PC-9 (cell line): ENCODE measurements at regions of chr4 and their contacts with region 1.

Region 1: GRCh38 chr4:95304898-95305297 is 243.9 kb downstream of the UNC5C start:
- DNase-seq: peak; percentile 48 to 78
- H3K4me3 ChIP-seq: no peak overlapping the region
- H3K27ac ChIP-seq: no peak overlapping the region
- H3K4me1 ChIP-seq: peaks cover 11% of the 10 kb centered on the region; the same call in 1 of the 2 replicates
- H3K27me3 ChIP-seq: no peaks in the 10 kb centered on the region
- CTCF ChIP-seq: no peak

Region 2: DNA sequence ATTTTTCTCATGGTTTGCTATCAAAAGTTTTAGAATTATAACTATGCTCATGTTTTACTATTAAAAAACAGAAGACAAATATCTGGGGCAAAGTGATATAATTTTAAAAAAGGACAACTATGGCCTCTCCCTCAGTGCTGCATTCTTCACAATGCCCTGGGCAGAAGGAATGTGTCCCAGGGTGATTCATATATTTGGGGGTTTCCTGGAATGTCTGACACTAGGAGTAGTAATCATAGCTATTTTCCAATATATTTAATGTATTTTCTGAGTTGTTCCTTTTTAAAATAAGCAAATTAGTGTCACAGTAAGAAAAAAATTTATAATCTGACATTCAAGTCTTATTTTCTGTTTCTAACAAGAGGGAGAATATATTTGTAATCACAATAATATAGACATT is 37.8 kb before region 1 on chr4:
- CTCF ChIA-PET with region 1: no interaction called
- POLR2A ChIA-PET with region 1: no interaction called
- intact Hi-C with region 1: loop called (anchors 1 kb)
- DNase-seq: peak; percentile 4 to 40
- H3K4me3 ChIP-seq: no peak overlapping the region
- H3K27ac ChIP-seq: peak overlapping the region; percentile 41
- H3K4me1 ChIP-seq: peaks cover 13% of the 10 kb centered on the region
- H3K27me3 ChIP-seq: no peaks in the 10 kb centered on the region
- CTCF ChIP-seq: no peak

Region 3: DNA sequence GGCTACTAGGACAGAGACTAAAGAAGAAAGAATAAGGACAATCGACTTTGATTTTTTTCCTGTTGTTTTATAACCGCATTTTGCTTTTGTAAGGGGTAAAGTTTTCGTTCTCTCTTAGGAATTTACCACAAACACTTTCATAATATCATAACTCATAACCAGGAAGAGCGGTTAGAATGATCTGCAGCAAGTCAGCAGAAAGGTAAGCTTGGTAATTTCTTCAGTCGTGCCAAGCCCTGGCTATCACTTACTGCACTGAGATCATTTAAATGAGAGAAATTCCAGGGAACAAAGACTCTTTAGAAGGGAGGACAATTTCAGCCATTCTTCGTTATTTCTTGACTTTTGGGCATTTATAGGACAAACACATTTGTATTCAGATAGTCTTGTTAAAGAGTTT is 14.2 kb before region 1 on chr4:
- CTCF ChIA-PET with region 1: no interaction called
- POLR2A ChIA-PET with region 1: interaction called, 8 read pairs
- intact Hi-C with region 1: loop called (anchors 2 kb)
- DNase-seq: peak in 1 of 2 experiments; percentile 55
- H3K4me3 ChIP-seq: no peak overlapping the region
- H3K27ac ChIP-seq: no peak overlapping the region
- H3K4me1 ChIP-seq: peaks cover 18% of the 10 kb centered on the region
- H3K27me3 ChIP-seq: no peaks in the 10 kb centered on the region
- CTCF ChIP-seq: no peak